Calu3 (cell line): ENCODE measurements at regions of chr3 and their contacts with region 1.

Region 1: GRCh38 chr3:19221086-19221485 is 72.8 kb downstream of the KCNH8 start:
- DNase-seq: peak; percentile 15
- H3K4me3 Mint-ChIP-seq: no peak overlapping the region
- H3K27ac Mint-ChIP-seq: no peak overlapping the region
- H3K4me1 Mint-ChIP-seq: no peaks in the 10 kb centered on the region
- H3K27me3 Mint-ChIP-seq: no peaks in the 10 kb centered on the region
- CTCF ChIP-seq: no peak

Region 2: DNA sequence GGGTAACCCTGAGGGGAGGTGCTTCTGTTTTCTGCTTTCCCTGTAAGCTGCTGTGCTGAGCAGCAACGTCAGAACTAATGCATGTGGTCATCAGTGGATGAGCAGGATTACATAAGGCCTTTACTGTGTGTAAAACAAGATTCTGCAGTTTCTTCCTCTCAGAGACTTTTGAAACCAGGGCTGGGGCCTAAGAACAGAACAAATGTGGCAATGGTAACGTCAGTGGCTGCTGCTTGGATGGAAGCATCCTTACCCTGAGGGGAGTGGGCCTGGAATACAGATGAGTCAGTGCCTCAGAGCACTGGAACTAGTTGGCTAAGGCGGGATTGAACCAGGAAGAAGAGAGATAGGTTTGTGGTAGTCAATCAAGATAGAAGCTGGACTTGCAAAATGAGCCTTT is 253.0 kb before region 1 on chr3:
- CTCF ChIA-PET with region 1: no interaction called
- intact Hi-C with region 1: no loop called
- DNase-seq: no peak
- H3K4me3 Mint-ChIP-seq: no peak overlapping the region
- H3K27ac Mint-ChIP-seq: no peak overlapping the region
- H3K4me1 Mint-ChIP-seq: no peaks in the 10 kb centered on the region
- H3K27me3 Mint-ChIP-seq: no peaks in the 10 kb centered on the region
- CTCF ChIP-seq: no peak

Region 3: GRCh38 chr3:19146685-19147650 is 74.1 kb before region 1 on chr3:
- CTCF ChIA-PET with region 1: interaction called, 3 read pairs
- intact Hi-C with region 1: loop called (anchors 1 kb)
- DNase-seq: peak; percentile 77
- H3K4me3 Mint-ChIP-seq: peak overlapping the region; percentile 89
- H3K27ac Mint-ChIP-seq: peak overlapping the region; percentile 78
- H3K4me1 Mint-ChIP-seq: peaks cover 12% of the 10 kb centered on the region
- H3K27me3 Mint-ChIP-seq: peaks cover 26% of the 10 kb centered on the region
- CTCF ChIP-seq: peak; percentile 40